ENCODE measurements at regions of chr13 and their contacts with region 1.

Region 1: GRCh38 chr13:113296842-113297369 is at the start of gene LAMP1:
- DNase-seq: peak; percentile 100
- H3K4me3 ChIP-seq: peak within 1 kb of the TSS; percentile 91 to 99 (median 98)
- H3K27ac ChIP-seq: peak within 1 kb of the TSS; percentile 86 to 94 (median 90)
- H3K4me1 ChIP-seq: peaks cover 24 to 47% (median 45%) of the 10 kb centered on the region in 4 donors
- H3K27me3 ChIP-seq: peaks cover 0 to 3% (median 0%) of the 10 kb centered on the region in 4 donors
- CTCF ChIP-seq: peak in 1 of 3 experiments; percentile 28
- EP300 ChIP-seq: peak; percentile 31
- POLR2A ChIP-seq: peak; percentile 68
- total RNA-seq, gene LAMP1: 99.7 to 168 (median 133) TPM

Region 2: DNA sequence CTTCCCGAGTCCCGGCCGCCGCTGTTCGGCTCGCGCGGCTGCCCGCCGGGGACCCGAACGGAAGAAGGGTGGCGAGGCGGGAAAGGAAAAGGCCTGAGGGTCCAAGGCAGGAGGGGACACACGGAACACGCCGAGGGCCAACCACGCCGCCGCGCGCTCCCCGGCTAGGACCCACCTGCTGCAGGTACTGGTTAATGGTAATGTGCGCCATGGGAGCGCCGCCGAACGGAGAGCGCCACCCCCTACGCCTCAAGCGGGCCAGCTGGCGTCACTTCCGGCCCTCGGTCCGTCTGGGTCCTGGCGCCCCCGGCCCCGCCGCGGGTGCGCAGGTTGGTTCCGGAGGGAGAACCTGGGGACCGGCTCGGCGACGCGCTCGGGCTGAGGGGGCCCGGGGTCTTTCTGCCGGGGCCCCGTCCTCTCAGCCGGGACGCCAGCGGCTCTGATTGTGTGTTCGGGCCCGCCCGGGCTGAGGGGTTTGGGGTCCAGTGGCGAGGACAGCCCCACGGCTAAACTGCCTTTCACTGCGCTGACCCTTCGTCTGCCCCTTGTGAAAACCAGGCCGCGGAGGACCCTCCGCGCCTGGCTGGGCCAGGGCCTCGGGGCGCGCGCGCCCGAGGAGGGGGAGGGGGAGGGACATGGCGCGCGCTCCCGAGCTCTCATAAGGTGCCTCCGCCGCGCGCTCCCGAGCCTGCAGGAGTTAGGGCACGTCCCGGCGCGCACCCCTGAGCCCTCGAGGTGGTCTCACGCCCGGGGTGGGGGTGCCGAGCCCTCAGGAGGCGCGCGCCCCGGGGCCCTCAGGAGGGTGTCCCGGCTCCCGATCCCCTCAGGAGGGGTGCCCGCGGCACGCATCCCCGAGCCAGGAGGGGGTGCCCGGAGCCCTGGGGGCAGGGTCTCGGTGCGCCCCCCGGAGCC is 88.2 kb before region 1 on chr13 and contains the start of gene PCID2:
- intact Hi-C with region 1: loop called (anchors 5 kb)
- DNase-seq: peak; percentile 96
- H3K4me3 ChIP-seq: peak within 1 kb of the TSS; percentile 87 to 88 (median 88)
- H3K27ac ChIP-seq: peak within 1 kb of the TSS; percentile 99 to 100 (median 100)
- H3K4me1 ChIP-seq: peaks cover 47 to 82% (median 80%) of the 10 kb centered on the region in 4 donors
- H3K27me3 ChIP-seq: no peaks in the 10 kb centered on the region
- CTCF ChIP-seq: no peak
- EP300 ChIP-seq: no peak
- POLR2A ChIP-seq: peak; percentile 78
- total RNA-seq, gene PCID2: 34.5 to 46.9 (median 42.3) TPM

Region 3: DNA sequence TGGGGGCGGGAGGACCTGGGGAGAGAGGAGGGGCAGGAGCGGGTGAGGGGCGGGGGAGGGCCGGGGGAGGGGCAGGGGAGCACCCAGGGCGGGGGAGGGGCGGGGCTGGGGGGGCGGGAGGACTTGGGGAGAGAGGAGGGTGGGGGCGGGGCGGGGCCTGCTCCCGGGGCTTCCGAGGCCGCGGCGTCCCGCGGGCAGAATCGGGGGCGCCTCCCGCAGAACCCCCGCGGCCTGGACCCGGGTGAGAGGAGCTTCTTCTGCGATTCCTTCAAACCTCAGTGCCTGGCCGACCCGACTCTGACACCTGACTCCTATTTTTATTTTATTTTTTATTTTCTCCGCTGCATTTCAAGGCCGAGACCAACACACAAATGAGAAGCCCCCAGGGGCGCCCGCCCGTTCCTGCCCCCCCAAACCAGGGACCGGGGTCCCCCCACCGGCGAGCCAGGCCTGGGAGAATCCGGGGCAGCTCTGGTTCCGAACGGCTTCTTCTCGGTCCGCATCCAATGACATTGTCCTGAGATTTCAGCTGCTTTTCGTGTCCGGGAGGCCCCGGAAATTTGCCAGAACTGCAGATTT is 67.5 kb after region 1 on chr13:
- intact Hi-C with region 1: loop called (anchors 10 kb)
- DNase-seq: no peak
- H3K4me3 ChIP-seq: peak overlapping the region; percentile 65 to 82 (median 76)
- H3K27ac ChIP-seq: peak overlapping the region; percentile 79 to 84 (median 81)
- H3K4me1 ChIP-seq: peaks cover 8 to 29% (median 26%) of the 10 kb centered on the region in 4 donors
- H3K27me3 ChIP-seq: peaks cover 0 to 9% (median 2%) of the 10 kb centered on the region in 4 donors
- CTCF ChIP-seq: no peak
- EP300 ChIP-seq: no peak
- POLR2A ChIP-seq: no peak

Region 4: GRCh38 chr13:113393563-113394338 is 96.8 kb after region 1 on chr13:
- intact Hi-C with region 1: loop called (anchors 10 kb)
- DNase-seq: no peak
- H3K4me3 ChIP-seq: peak overlapping the region; percentile 70 to 87 (median 79)
- H3K27ac ChIP-seq: peak overlapping the region; percentile 30 to 67 (median 59)
- H3K4me1 ChIP-seq: peaks cover 14 to 25% (median 16%) of the 10 kb centered on the region in 4 donors
- H3K27me3 ChIP-seq: no peaks in the 10 kb centered on the region
- CTCF ChIP-seq: peak; percentile 91 to 99 (median 98)
- EP300 ChIP-seq: no peak
- POLR2A ChIP-seq: no peak

Region 5: GRCh38 chr13:113445791-113446487 is 149.0 kb after region 1 on chr13:
- intact Hi-C with region 1: no loop called
- DNase-seq: no peak
- H3K4me3 ChIP-seq: no peak overlapping the region
- H3K27ac ChIP-seq: no peak overlapping the region
- H3K4me1 ChIP-seq: peaks cover 0 to 38% (median 2%) of the 10 kb centered on the region in 4 donors
- H3K27me3 ChIP-seq: no peaks in the 10 kb centered on the region
- CTCF ChIP-seq: no peak
- EP300 ChIP-seq: no peak
- POLR2A ChIP-seq: no peak

Region 6: DNA sequence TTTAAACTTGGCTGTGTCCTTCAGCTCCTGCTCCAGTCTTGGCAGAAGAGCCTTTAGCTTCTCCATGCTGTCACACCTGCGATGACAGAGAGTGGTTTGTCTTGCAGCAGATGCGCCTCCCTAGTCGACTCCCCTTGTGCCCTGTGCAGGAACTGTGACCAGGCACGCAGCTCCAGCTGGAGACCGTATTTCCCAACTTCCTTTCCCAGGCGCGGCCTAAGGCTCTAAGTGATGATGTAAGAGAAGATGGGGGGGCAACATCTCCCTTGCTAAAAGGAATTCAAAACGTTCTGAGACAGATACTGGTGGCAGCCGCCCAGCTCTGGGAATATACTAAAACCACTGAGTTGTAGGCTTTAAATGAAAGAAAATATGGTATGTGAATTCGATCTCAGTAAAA is 177.3 kb after region 1 on chr13:
- intact Hi-C with region 1: no loop called
- DNase-seq: peak; percentile 75
- H3K4me3 ChIP-seq: no peak overlapping the region
- H3K27ac ChIP-seq: no peak overlapping the region
- H3K4me1 ChIP-seq: no peaks in the 10 kb centered on the region
- H3K27me3 ChIP-seq: no peaks in the 10 kb centered on the region
- CTCF ChIP-seq: no peak
- EP300 ChIP-seq: no peak
- POLR2A ChIP-seq: no peak